Activated CD8-positive, alpha-beta memory T cell treated with anti-CD3 and anti-CD28 coated beads, Interleukin-2, amount 10 ng/mL, durations not matched to agents 7 days and 5 days (primary cell): ENCODE measurements at regions of chr3 and their contacts with region 1.

Region 1: DNA sequence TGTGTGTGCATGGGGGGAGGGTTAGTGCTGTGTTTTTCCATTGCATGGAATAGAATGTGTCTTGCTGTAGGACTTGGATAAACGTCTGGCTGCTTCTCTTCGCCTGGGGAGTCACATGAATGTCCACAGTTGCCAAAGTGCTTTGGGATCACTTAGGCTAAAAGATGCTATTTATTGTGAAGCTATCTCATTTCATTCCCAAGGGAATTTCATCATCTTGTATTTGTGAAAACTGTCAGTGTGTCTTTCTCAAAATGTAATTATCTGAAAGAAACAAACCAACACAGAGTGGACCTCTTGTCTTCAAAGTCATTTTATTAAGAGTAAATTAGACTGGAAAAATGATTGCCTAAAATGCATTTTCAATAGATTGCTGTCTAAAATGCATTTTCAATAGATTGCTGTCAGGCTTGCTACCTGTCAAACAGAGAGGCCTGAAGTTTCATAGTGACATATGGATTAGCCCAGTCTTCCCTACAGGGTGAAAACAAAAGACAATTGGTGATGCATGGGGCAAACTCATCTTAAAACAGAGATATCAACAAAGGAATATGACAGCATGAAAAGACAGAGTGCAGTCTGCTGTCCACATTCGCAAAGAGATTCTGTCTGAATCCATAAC is 117.1 kb upstream of the GOLIM4 start:
- DNase-seq: no peak
- ATAC-seq: no peak
- H3K4me3 Mint-ChIP-seq: no peak overlapping the region
- H3K27ac Mint-ChIP-seq: no peak overlapping the region
- H3K4me1 Mint-ChIP-seq: peaks cover 15% of the 10 kb centered on the region
- H3K27me3 Mint-ChIP-seq: no peaks in the 10 kb centered on the region

Region 2: DNA sequence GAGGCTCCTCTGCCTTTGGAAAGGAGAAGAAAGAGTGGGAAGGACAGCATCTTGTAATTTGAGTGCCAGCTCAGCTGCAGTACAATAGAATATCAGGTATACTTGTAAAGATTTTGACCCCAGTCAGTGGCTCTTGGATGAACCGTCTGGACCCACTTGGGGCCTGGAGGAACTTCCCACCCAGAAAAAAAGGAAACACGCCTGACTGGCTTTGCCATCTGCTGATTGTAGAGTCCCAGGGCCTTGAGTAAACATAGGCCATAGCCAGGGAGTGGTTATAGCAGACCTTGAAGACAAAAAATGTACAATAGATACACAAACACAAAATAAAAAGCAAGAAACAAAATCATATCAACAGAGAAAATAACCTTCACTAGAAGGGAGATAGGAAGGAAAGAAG is 229.2 kb before region 1 on chr3:
- CTCF ChIA-PET with region 1: no interaction called
- DNase-seq: no peak
- ATAC-seq: no peak
- H3K4me3 Mint-ChIP-seq: no peak overlapping the region
- H3K27ac Mint-ChIP-seq: no peak overlapping the region
- H3K4me1 Mint-ChIP-seq: no peaks in the 10 kb centered on the region
- H3K27me3 Mint-ChIP-seq: peaks cover 11% of the 10 kb centered on the region

Region 3: DNA sequence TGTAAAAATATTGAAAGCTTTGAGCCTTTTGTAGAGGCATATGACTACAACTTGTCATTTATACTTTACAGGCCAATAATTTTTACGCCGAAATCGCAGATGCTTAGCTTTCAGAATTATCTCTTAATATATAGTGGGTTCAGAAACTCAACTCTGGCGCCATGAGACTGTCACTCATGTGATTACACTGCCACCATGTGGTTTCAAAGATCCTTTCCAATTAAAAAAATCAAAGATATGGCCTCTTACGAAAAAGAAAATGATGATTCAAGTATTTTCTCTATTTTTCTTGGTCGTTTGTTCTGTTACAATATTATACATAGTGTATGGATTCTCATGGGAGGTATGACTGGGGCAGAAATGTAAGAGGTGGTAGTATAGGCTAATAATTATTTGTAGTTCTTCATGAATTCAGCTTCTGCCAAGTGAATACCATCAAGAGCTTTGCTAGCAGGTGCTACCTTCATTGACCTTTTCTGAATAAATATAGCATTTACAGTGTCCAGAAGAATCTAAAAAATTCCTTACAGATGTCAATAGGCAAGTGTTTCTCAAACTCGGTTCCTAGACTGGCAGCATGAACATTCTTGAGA is 634.6 kb after region 1 on chr3:
- CTCF ChIA-PET with region 1: interaction called, 15 read pairs
- DNase-seq: no peak
- ATAC-seq: no peak
- H3K4me3 Mint-ChIP-seq: no peak overlapping the region
- H3K27ac Mint-ChIP-seq: no peak overlapping the region
- H3K4me1 Mint-ChIP-seq: no peaks in the 10 kb centered on the region
- H3K27me3 Mint-ChIP-seq: no peaks in the 10 kb centered on the region